ENCODE measurements at regions of chr1 and their contacts with region 1.

Region 1: DNA sequence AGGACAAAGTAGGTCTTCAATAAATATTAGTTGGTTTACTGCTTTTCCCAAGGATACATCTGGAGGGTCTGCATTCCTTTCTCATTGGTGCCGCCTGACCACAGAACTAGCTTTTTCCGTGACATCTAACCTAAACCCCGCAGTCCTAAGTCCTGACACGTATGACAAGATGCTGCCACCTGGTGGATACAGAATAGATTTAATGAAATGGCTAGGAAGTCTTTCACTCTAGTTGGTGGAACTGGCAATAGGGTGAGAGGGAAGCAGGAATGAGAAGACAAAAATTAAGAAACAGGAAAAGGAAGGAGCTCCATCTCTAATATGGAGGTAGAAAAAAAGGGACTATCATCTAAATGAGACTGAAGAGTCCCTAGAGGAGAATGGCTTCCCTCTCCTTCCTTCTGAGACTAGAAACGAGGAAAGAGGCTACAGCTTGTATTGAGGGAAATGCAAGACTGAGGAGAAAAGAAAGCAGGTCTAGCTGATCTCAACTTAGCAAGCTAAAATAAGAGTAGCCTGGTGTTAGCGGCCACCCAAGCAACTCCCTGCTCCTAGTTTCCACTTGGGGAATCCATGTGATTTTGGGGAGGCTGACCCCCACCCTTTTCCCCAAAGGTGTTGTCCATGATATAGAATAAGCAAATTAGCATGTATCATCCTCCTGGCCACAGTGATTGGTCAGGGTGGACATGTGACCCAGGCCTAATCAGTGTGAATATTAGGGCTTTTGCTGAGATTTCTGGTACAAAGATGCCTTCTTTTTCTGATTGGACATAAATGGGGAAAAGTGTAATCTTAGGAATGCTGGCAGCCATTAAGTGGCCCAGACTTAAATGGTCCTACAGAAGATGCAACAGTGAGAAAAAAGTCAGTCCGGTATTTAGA is 5.9 kb downstream of the RFX5 start:
- DNase-seq: peak; percentile 94
- H3K4me3 Mint-ChIP-seq: no peak overlapping the region
- H3K27ac Mint-ChIP-seq: no peak overlapping the region
- H3K4me1 Mint-ChIP-seq: peaks cover 11% of the 10 kb centered on the region
- H3K27me3 Mint-ChIP-seq: no peaks in the 10 kb centered on the region
- CTCF ChIP-seq: peak; percentile 74

Region 2: GRCh38 chr1:151198255-151199127 is 142.6 kb before region 1 on chr1 and contains the start of gene PIP5K1A:
- CTCF ChIA-PET with region 1: interaction called, 11 read pairs
- POLR2A ChIA-PET with region 1: interaction called, 10 read pairs
- intact Hi-C with region 1: loop called (anchors 1 kb)
- DNase-seq: peak; percentile 100
- H3K4me3 Mint-ChIP-seq: peak within 1 kb of the TSS; percentile 93
- H3K27ac Mint-ChIP-seq: peak within 1 kb of the TSS; percentile 95
- H3K4me1 Mint-ChIP-seq: peaks cover 40% of the 10 kb centered on the region
- H3K27me3 Mint-ChIP-seq: no peaks in the 10 kb centered on the region
- CTCF ChIP-seq: no peak
- total RNA-seq, gene PIP5K1A: 150 and 163 TPM in 2 replicates

Region 3: DNA sequence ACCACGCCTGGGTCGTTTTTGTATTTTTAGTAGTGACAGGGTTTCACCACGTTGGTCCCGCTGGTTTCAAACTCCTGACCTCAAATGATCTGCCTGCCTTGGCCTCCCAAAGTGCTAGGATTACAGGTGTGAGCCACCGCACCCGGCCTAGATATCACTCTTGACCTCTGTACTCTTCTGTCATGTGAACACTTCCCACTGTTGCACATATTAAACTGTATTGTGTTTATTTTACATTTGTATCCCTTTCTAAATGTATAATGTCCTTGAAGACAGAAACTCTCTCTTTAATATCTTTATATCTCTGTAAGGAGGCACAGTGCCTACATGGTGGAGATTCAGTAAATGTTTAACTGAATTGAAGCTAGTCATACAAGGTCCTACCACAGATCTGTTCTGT is 105.9 kb before region 1 on chr1:
- CTCF ChIA-PET with region 1: no interaction called
- POLR2A ChIA-PET with region 1: no interaction called
- intact Hi-C with region 1: no loop called
- DNase-seq: no peak
- H3K4me3 Mint-ChIP-seq: no peak overlapping the region
- H3K27ac Mint-ChIP-seq: no peak overlapping the region
- H3K4me1 Mint-ChIP-seq: peaks cover 12% of the 10 kb centered on the region
- H3K27me3 Mint-ChIP-seq: no peaks in the 10 kb centered on the region
- CTCF ChIP-seq: no peak

Region 4: GRCh38 chr1:151281969-151282882 is 58.9 kb before region 1 on chr1 and contains the start of gene ZNF687:
- CTCF ChIA-PET with region 1: interaction called, 26 read pairs
- POLR2A ChIA-PET with region 1: interaction called, 21 read pairs
- intact Hi-C with region 1: no loop called
- DNase-seq: peak; percentile 100
- H3K4me3 Mint-ChIP-seq: peak within 1 kb of the TSS; percentile 97
- H3K27ac Mint-ChIP-seq: peak within 1 kb of the TSS; percentile 99
- H3K4me1 Mint-ChIP-seq: peaks cover 19% of the 10 kb centered on the region
- H3K27me3 Mint-ChIP-seq: peaks cover 9% of the 10 kb centered on the region
- CTCF ChIP-seq: no peak
- total RNA-seq, gene ZNF687: 26.3 and 27.5 TPM in 2 replicates

Region 5: GRCh38 chr1:151311589-151312331 is 29.4 kb before region 1 on chr1:
- CTCF ChIA-PET with region 1: interaction called, 566 read pairs
- POLR2A ChIA-PET with region 1: interaction called, 23 read pairs
- intact Hi-C with region 1: no loop called
- DNase-seq: peak; percentile 100
- H3K4me3 Mint-ChIP-seq: no peak overlapping the region
- H3K27ac Mint-ChIP-seq: peak overlapping the region; percentile 95
- H3K4me1 Mint-ChIP-seq: peaks cover 40% of the 10 kb centered on the region
- H3K27me3 Mint-ChIP-seq: no peaks in the 10 kb centered on the region
- CTCF ChIP-seq: no peak

Region 6: DNA sequence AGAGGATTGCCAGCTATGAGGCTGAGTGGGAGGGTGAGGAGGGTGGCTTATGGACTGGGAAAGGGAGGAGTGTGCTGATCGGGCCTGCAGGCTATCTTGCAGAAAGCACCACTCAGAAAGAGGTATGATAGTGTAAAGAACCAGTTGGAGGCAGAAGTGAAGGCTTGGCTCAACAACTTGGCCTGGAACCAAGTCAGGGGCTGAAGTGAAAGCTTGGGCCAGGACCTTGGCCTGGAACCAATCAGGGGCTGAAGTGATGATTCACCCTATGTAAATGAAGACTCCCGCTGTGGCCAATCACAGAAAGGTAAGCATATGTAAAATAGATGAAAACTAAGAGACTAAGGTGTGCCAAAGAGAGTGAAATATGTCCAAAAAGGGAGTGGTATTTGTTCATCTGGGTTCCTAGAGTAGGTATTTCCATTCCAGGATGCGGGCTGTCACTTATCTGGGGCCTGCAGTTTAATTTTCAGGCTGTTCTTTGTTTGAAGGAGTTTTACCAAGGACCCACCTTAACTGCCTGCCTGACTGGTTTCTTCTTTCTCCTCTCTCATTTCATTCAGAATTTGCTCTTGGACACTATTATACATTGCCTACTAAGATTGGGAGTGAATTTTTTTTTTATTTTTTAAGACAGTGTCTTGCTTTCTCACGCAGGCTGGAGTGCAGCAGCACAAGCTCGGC is 11.0 kb after region 1 on chr1:
- CTCF ChIA-PET with region 1: interaction called, 104 read pairs
- POLR2A ChIA-PET with region 1: interaction called, 8 read pairs
- intact Hi-C with region 1: no loop called
- DNase-seq: peak; percentile 97
- H3K4me3 Mint-ChIP-seq: no peak overlapping the region
- H3K27ac Mint-ChIP-seq: peak overlapping the region; percentile 8
- H3K4me1 Mint-ChIP-seq: peaks cover 14% of the 10 kb centered on the region
- H3K27me3 Mint-ChIP-seq: no peaks in the 10 kb centered on the region
- CTCF ChIP-seq: no peak

Region 7: DNA sequence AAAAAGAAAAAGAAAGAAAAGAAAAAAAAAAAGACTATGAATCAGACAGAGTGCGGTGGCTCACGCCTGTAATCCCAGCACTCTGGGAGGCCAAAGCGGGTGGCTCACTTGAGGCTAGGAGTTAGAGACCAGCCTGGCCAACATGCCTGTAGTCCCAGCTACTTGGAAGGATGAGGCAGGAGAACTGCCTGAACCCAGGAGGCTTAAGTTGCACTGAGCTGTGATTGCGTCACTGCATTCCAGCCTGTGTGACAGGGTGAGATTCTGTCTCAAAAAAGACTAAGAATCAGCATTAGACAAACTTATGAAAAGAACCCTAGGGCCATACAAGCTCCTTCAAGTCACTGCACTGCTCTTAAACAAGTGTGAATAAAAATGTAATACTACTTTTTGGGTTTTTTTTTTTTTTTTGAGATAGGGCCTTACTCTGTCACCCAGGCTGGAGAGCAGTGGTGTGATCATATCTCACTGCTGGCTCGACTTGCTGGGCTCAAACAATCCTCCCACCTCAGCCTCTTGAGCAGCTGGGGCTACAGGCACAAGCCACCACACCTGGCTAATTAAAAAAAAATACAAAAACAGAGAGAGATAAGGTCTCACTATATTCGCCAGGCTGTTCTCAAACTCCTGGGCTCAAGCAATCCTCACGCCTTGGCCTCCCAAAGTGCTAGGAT is 75.3 kb after region 1 on chr1:
- CTCF ChIA-PET with region 1: interaction called, 11 read pairs
- POLR2A ChIA-PET with region 1: no interaction called
- intact Hi-C with region 1: no loop called
- DNase-seq: peak; percentile 44
- H3K4me3 Mint-ChIP-seq: no peak overlapping the region
- H3K27ac Mint-ChIP-seq: no peak overlapping the region
- H3K4me1 Mint-ChIP-seq: no peaks in the 10 kb centered on the region
- H3K27me3 Mint-ChIP-seq: no peaks in the 10 kb centered on the region
- CTCF ChIP-seq: no peak

Region 8: DNA sequence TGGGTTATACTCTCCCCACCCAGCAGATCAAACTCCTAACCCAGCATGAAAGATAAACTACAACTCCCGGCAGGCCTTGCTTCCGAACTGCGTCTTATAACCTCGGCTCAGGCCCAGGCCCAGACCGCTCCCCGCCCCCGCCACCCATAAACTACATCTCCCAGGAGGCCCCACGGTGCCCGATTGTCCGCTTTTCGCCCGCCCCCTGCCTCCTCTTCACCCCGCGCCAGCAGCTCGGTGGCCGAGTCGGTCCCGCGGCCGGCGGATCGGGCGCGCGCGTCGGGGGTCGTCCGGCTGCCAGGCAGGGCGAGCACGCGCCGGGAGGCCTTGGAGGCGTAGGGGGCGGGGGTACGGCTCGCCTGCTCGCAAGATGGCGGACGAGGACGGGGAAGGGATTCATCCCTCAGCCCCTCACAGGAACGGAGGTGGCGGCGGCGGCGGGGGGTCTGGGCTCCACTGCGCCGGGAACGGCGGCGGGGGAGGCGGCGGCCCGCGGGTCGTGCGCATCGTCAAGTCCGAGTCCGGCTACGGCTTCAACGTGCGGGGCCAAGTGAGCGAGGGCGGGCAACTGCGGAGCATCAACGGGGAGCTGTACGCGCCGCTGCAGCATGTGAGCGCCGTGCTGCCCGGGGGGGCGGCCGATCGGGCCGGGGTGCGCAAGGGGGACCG is 270.9 kb after region 1 on chr1 and contains the start of gene SNX27:
- CTCF ChIA-PET with region 1: no interaction called
- POLR2A ChIA-PET with region 1: no interaction called
- intact Hi-C with region 1: no loop called
- DNase-seq: peak; percentile 96
- H3K4me3 Mint-ChIP-seq: peak within 1 kb of the TSS; percentile 89
- H3K27ac Mint-ChIP-seq: peak within 1 kb of the TSS; percentile 88
- H3K4me1 Mint-ChIP-seq: peaks cover 60% of the 10 kb centered on the region
- H3K27me3 Mint-ChIP-seq: no peaks in the 10 kb centered on the region
- CTCF ChIP-seq: no peak
- total RNA-seq, gene SNX27: 36.9 and 43.1 TPM in 2 replicates